Calu3 (cell line): ENCODE measurements at regions of chr1 and their contacts with region 1.

Region 1: GRCh38 chr1:198771563-198772153 is 132.8 kb downstream of the PTPRC start:
- DNase-seq: peak; percentile 42
- H3K4me3 Mint-ChIP-seq: no peak overlapping the region
- H3K27ac Mint-ChIP-seq: no peak overlapping the region
- H3K4me1 Mint-ChIP-seq: no peaks in the 10 kb centered on the region
- H3K27me3 Mint-ChIP-seq: no peaks in the 10 kb centered on the region
- CTCF ChIP-seq: peak; percentile 73

Region 2: GRCh38 chr1:199243423-199244061 is 471.9 kb after region 1 on chr1:
- CTCF ChIA-PET with region 1: no interaction called
- intact Hi-C with region 1: loop called (anchors 5 kb)
- DNase-seq: peak; percentile 83
- H3K4me3 Mint-ChIP-seq: no peak overlapping the region
- H3K27ac Mint-ChIP-seq: no peak overlapping the region
- H3K4me1 Mint-ChIP-seq: peaks cover 38% of the 10 kb centered on the region
- H3K27me3 Mint-ChIP-seq: no peaks in the 10 kb centered on the region
- CTCF ChIP-seq: peak; percentile 69

Region 3: DNA sequence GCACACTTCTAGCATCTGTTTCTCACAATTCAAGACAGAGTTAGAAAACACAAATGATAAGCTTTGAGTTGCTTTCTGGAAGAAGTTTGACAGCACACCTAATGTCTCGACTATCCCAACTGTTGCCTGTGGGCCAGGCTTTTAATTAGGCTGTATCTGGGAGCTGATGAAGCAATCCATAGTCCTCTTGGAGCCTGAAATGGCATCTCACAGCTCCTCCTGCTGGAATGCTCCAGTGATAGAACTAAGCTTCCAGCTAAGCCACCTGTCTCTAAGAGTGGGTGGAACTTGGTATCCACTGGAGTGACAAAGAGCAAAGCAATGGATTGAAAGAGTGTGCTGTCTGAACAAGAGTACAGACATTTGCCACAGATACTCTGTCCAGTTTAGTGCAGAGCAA is 650.5 kb after region 1 on chr1:
- CTCF ChIA-PET with region 1: interaction called, 3 read pairs
- intact Hi-C with region 1: loop called (anchors 2 kb)
- DNase-seq: peak; percentile 51
- H3K4me3 Mint-ChIP-seq: no peak overlapping the region
- H3K27ac Mint-ChIP-seq: no peak overlapping the region
- H3K4me1 Mint-ChIP-seq: no peaks in the 10 kb centered on the region
- H3K27me3 Mint-ChIP-seq: no peaks in the 10 kb centered on the region
- CTCF ChIP-seq: peak; percentile 59

Region 4: DNA sequence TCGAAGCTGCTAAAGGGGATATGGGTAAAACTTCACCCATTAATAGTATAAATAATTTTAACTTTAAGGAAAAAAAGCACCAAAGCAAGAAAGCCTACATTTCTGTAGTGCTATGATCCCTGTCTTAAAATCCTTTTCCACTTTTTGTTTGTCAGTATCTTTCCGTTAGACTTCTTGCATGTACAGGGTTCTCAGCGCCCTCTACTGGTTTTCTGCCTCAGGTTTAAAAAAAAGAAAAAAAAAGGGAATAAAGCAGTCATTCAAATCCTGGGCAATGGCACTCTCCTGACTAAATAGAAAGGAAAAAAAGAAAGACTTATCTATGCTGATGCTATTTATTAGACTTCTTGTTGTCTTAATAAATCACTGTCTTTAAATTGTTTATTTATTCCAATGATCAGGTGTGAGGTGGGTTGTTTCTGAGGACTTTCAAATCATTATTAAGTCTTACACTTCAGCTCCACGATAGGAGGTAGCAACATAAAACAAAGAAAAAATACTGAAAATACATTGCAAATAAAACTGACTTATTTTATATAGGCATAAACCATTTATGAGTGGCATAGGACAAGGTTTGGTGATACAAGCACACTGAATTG is 780.4 kb after region 1 on chr1:
- CTCF ChIA-PET with region 1: no interaction called
- intact Hi-C with region 1: loop called (anchors 1 kb)
- DNase-seq: peak; percentile 72
- H3K4me3 Mint-ChIP-seq: no peak overlapping the region
- H3K27ac Mint-ChIP-seq: no peak overlapping the region
- H3K4me1 Mint-ChIP-seq: no peaks in the 10 kb centered on the region
- H3K27me3 Mint-ChIP-seq: no peaks in the 10 kb centered on the region
- CTCF ChIP-seq: peak; percentile 68